ENCODE measurements at regions of chr13 and their contacts with region 1.

Region 1: GRCh38 chr13:30802953-30803478 is 67.7 kb downstream of the ALOX5AP start:
- DNase-seq: peak; percentile 83 to 93 (median 88)
- ATAC-seq: peak; percentile 89 to 98 (median 97)
- H3K4me3 ChIP-seq: peak overlapping the region in 9 of 12 donors; percentile 44 to 66 (median 47)
- H3K27ac ChIP-seq: peak overlapping the region in 3 of 12 donors; percentile 38 to 66 (median 54)
- H3K4me1 ChIP-seq: peaks cover 0 to 35% (median 19%) of the 10 kb centered on the region in 12 donors
- H3K27me3 ChIP-seq: no peaks in the 10 kb centered on the region
- CTCF ChIP-seq: peak; percentile 90 to 98 (median 96)
- POLR2A ChIP-seq: no peak

Region 2: GRCh38 chr13:30355384-30355699 is 447.7 kb before region 1 on chr13:
- intact Hi-C with region 1: loop called in 3 of 10 experiments (anchors 5 to 10 kb)
- DNase-seq: peak in 1 of 5 donors; percentile 37
- ATAC-seq: peak in 2 of 4 donors; percentile 57 to 73
- H3K4me3 ChIP-seq: no peak overlapping the region
- H3K27ac ChIP-seq: no peak overlapping the region
- H3K4me1 ChIP-seq: peaks cover 0 to 9% (median 0%) of the 10 kb centered on the region in 12 donors
- H3K27me3 ChIP-seq: no peaks in the 10 kb centered on the region
- CTCF ChIP-seq: peak; percentile 43 to 59 (median 51)
- POLR2A ChIP-seq: no peak

Region 3: DNA sequence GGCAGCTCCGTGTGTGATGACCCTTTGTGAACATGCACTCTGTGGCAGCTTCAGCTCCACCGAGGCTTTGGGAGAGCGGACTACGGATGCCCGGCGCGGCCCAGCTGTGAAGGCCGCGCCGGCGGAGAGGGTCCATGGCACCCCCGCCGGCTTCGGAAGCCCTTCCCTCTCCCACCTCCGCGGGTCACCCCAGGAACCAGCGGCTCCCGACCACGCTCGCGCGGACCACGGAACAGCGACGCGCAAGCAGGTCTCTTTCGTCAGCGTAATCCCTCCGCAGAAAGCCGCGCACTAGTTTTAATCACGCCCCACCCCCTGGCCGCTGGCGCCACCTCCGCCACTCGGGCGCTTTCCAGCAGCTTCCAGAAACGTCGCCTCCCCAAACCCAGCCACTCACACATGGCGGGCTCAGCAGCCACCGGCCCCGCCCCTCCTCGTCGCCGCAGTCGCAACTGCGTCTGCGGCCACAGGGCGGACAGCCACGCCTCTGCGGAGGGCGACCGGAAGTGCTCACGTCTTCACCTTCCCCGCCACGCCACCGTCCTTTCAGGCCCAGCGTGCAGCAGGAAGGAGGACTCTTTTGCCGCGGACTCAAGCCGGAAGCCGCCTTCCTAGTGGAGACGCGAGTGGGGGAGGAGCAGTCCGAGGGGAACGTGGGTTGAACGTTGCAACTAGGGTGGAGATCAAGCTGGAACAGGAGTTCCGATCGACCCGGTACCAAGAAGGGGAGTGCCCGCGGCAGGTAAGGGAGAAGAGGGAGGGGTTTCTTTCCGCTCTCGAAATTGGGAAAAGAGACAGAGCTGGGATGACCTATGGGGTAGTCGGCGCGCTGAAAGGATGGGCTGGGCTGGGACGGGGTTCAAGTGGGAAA is 185.5 kb before region 1 on chr13 and contains the start of gene USPL1:
- intact Hi-C with region 1: loop called in 3 of 10 experiments (anchors 10 kb)
- DNase-seq: peak; percentile 99
- ATAC-seq: peak; percentile 95 to 98 (median 96)
- H3K4me3 ChIP-seq: peak within 1 kb of the TSS; percentile 61 to 89 (median 84)
- H3K27ac ChIP-seq: peak within 1 kb of the TSS; percentile 98 to 100 (median 99)
- H3K4me1 ChIP-seq: peaks cover 0 to 42% (median 25%) of the 10 kb centered on the region in 12 donors
- H3K27me3 ChIP-seq: no peaks in the 10 kb centered on the region
- CTCF ChIP-seq: peak in 11 of 12 donors; percentile 14 to 48 (median 32)
- POLR2A ChIP-seq: peak; percentile 40 to 92
- total RNA-seq, gene USPL1: 9.0 to 14.3 (median 10.2) TPM

Region 4: DNA sequence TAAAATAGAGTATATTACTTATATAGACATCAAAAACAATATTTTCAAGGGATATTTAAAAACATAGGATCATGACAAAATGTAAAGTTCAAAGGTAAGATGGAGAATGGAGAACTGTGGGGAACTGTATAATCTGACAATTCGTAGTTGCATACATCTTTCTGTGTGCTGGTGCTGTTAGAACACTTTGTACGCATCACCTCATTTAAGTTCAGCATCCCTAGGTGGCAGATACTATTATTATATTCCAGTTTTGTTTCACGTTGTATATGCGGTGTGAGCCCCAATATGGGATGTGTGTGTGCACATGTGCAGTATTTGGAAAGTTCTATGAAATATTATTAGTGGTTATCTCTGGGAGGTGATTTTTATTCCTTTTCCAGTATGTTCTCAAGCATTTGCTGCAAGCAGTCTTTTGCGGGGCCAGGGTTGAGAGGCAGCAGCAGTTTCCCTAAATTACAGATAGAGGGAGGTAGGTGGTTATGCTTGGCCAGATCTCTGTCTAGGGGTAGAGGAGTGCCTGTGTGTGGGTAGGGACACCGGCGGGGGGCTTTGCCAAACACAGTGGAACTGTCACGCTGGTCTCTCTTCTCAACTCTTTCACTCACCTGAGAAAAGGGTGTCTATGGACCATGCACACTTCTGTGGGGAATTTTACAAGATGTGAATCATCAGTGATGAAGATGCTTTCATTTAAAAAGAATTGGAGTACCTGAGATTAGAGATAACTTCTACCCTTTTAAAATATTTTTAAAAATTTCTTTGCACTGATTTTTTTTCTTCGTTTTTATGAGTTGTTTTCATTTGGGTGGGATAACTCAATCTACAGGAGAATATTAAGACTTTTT is 123.3 kb before region 1 on chr13:
- intact Hi-C with region 1: loop called (anchors 1 to 5 kb)
- DNase-seq: peak in 1 of 5 donors; percentile 33
- ATAC-seq: peak; percentile 52 to 85 (median 74)
- H3K4me3 ChIP-seq: no peak overlapping the region
- H3K27ac ChIP-seq: no peak overlapping the region
- H3K4me1 ChIP-seq: peaks cover 0 to 19% (median 0%) of the 10 kb centered on the region in 12 donors
- H3K27me3 ChIP-seq: no peaks in the 10 kb centered on the region
- CTCF ChIP-seq: peak; percentile 34 to 68 (median 53)
- POLR2A ChIP-seq: no peak

Region 5: DNA sequence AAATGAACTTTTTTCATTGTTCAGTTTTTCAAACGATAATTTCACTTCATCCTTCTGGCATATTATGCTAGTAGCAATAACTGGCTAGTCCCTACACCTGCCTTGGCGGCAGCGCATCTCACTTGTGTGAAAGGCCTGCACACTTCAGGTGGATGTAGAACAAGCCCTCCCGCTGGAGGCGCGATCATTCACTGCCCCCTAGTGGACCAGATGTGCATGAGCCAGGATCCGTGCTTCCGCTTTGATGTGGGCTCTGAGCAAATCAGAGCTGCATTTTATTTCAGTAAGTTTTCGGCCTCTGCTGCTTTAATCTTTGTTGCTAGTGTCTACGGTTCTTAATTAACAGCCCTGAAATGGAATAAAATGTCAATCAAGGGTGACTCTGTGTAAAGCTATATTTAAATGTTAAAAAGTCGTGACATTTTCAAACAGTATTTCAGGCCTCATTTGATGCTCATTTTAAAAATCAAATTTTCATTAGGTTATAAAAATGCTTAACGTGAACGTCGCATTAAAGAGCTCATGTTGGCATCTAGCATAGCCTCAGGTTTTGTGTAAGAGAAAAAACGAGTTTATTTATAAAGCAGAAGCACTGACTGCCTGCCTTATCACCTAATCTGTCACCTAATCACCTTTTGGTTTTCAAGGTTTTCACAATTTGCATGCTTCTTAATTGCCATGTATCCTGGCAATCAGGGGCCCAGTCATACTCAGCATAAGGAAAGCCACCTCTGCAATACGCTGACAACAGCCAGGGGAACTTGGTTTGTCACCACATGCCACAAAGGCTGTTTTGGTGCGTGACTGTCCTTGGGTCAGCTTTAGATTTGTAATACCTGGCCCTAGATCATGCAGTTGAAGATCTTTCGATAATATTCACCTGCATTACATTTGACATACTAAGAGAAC is 241.6 kb after region 1 on chr13:
- intact Hi-C with region 1: loop called in 6 of 10 experiments (anchors 5 to 10 kb)
- DNase-seq: peak; percentile 66 to 88 (median 75)
- ATAC-seq: peak; percentile 81 to 92 (median 84)
- H3K4me3 ChIP-seq: no peak overlapping the region
- H3K27ac ChIP-seq: peak overlapping the region in 2 of 12 donors; percentile 59 to 82
- H3K4me1 ChIP-seq: peaks cover 0 to 32% (median 10%) of the 10 kb centered on the region in 12 donors
- H3K27me3 ChIP-seq: peaks cover 0 to 18% (median 0%) of the 10 kb centered on the region in 9 donors
- CTCF ChIP-seq: peak; percentile 91 to 98 (median 95)
- POLR2A ChIP-seq: no peak

Region 6: DNA sequence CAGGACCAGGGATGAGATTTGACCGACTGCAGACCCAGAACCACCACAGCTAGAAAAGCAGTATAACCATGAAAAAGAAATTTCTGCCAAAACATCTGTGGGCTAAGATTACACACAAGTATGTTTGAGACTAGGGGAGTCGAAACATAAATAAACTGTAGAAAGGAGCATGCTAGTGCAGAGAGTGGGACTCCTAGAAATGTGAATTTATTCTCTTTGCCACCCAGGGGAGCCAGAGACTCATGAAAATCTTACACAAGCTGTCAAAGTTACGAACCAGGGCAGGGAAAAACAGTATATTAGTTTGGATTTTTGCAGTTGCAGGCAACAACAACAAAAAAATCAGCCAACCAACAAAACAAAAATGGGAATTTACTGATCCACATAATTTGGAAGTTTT is 371.0 kb after region 1 on chr13:
- intact Hi-C with region 1: no loop called
- DNase-seq: no peak
- ATAC-seq: no peak
- H3K4me3 ChIP-seq: no peak overlapping the region
- H3K27ac ChIP-seq: no peak overlapping the region
- H3K4me1 ChIP-seq: no peaks in the 10 kb centered on the region
- H3K27me3 ChIP-seq: no peaks in the 10 kb centered on the region
- CTCF ChIP-seq: peak in 6 of 12 donors; percentile 11 to 32 (median 24)
- POLR2A ChIP-seq: no peak